AG04450 (cell line): ENCODE measurements at regions of chr6 and their contacts with region 1.

Region 1: DNA sequence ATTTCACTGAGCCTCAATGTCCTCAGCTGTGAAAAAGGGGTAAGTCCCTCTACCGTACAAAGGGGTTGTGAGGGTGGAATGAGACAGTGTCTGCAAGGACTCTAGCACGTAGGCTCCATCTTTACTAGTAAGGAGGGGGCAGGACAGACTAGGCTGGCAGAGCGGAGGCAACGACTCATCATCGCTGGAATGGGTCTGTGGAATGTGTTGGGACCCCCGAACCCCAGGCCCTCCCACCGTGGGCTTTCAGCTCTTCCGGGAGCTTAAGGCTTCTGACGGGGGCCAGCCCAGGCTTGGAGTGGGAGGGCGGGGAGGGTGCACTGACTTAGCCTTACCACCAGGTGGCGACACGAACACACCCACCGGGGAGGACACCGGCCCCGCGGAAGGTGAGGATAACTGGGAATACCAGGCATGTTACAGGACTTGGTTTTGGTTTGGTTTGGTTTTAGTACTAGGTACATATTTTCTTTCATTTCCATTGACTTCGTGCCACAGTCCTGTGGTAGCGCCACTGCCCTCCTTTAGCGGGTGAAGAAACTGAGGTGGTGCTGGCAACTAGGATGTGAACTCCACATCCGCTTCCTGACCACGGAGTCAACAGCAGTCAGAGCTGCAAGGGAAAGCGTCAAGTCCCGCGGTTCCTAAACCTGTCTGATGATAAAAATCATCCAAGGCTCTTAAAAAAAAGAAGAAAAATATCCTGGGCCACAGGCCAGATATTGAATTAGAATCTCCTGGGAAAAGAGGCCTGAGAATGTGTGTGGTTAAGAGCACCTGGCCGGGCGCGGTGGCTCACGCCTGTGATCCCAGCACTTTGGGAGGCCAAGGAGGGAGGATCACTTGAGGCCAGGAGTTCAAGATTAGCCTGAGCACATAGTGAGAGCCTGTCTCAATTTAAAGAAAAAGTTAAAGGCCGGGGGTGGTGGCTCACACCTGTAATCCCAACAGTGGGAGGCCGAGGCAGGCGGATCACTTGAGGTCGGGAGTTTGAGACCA is 10.3 kb upstream of the TULP1 start:
- DNase-seq: no peak
- H3K4me3 ChIP-seq: peak overlapping the region; percentile 10; the same call in 1 of the 2 replicates
- H3K27ac ChIP-seq: no peak overlapping the region
- H3K27me3 ChIP-seq: peaks cover 3% of the 10 kb centered on the region
- CTCF ChIP-seq: peak; percentile 93

Region 2: DNA sequence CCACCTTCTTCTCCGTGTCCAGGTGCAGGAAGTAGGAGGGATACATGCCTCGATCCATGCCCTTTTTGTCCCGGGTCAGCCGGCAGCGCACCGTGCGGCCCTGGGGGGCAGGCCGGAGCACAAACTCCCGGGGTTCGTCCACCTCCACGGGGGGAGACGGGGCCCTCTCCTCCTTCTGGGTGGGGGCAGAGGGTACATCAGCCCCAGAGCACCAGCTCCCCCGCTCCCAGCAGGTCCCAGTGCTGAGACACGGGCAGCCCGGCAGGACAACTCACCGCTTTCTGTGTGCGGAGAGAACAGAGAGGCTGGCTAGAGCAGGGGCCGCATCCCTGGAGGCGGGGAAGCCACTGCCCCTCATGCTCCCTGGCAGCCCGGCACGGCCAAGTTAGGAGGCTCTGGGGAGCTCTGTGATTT is 17.0 kb before region 1 on chr6:
- CTCF ChIA-PET with region 1: interaction called, 17 read pairs
- POLR2A ChIA-PET with region 1: no interaction called
- DNase-seq: no peak
- H3K4me3 ChIP-seq: no peak overlapping the region
- H3K27ac ChIP-seq: no peak overlapping the region
- H3K27me3 ChIP-seq: peaks cover 44% of the 10 kb centered on the region
- CTCF ChIP-seq: no peak

Region 3: GRCh38 chr6:35534407-35535170 is 11.6 kb after region 1 on chr6:
- CTCF ChIA-PET with region 1: interaction called, 43 read pairs
- POLR2A ChIA-PET with region 1: no interaction called
- DNase-seq: no peak
- H3K4me3 ChIP-seq: no peak overlapping the region
- H3K27ac ChIP-seq: no peak overlapping the region
- H3K27me3 ChIP-seq: peaks cover 20% of the 10 kb centered on the region
- CTCF ChIP-seq: no peak

Region 4: GRCh38 chr6:35681298-35681697 is 158.3 kb after region 1 on chr6:
- CTCF ChIA-PET with region 1: interaction called, 15 read pairs
- POLR2A ChIA-PET with region 1: no interaction called
- DNase-seq: no peak
- H3K4me3 ChIP-seq: no peak overlapping the region
- H3K27ac ChIP-seq: no peak overlapping the region
- H3K27me3 ChIP-seq: no peaks in the 10 kb centered on the region
- CTCF ChIP-seq: no peak

Region 5: DNA sequence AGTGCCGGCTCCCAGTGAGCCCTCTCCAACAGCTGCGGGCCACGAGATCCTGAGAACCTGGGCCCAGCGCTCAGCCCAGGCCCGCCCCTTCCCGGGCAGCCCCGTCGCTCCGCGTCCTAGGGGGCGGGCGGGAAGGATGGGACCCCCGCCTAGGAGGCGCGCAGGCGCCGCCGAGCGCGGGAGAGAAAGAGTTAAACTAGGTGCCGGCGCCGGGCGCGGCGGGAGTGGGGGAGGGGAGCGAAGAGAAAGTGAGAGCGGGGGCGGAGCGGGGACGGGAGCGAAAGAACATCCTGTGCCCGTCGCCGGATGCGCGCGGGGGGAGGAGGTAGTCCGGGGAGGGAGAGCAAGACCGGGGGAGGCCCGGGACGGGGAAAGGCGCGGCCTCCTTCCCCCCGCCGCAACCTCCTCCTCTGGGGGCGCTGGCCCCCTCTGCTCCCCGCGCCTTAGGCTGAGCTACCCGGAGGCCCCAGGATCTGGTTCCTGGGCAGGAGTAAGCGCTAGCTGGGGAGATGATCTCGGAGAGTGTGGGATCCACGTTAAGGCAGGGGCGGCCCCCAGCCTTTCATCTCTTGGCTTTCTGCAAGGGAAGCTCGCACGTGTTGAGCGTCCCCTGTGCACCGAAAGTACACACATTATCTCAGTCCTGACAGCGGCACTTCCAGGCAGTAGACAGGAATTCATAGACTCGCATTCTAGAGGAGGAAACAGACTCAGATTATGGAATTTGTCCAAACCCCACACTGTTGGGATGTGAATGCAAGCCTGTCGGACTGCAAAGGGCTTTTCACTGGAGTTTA is 209.0 kb after region 1 on chr6:
- CTCF ChIA-PET with region 1: interaction called, 143 read pairs
- POLR2A ChIA-PET with region 1: no interaction called
- DNase-seq: peak; percentile 45
- H3K4me3 ChIP-seq: peak overlapping the region; percentile 73
- H3K27ac ChIP-seq: peak overlapping the region; percentile 91
- H3K27me3 ChIP-seq: no peaks in the 10 kb centered on the region
- CTCF ChIP-seq: no peak